CD4-positive, alpha-beta T cell (primary cell): ENCODE measurements at regions of chr18 and their contacts with region 1.

Region 1: GRCh38 chr18:75179819-75180600 is 28.9 kb downstream of the PTGR3 start:
- DNase-seq: no peak
- ATAC-seq: no peak
- H3K4me3 ChIP-seq: no peak overlapping the region
- H3K4me3 Mint-ChIP-seq: no peak overlapping the region
- H3K27ac ChIP-seq: no peak overlapping the region
- H3K27ac Mint-ChIP-seq: no peak overlapping the region
- H3K4me1 ChIP-seq: no peaks in the 10 kb centered on the region
- H3K4me1 Mint-ChIP-seq: no peaks in the 10 kb centered on the region
- H3K27me3 ChIP-seq: no peaks in the 10 kb centered on the region
- H3K27me3 Mint-ChIP-seq: no peaks in the 10 kb centered on the region
- CTCF ChIP-seq: no peak

Region 2: DNA sequence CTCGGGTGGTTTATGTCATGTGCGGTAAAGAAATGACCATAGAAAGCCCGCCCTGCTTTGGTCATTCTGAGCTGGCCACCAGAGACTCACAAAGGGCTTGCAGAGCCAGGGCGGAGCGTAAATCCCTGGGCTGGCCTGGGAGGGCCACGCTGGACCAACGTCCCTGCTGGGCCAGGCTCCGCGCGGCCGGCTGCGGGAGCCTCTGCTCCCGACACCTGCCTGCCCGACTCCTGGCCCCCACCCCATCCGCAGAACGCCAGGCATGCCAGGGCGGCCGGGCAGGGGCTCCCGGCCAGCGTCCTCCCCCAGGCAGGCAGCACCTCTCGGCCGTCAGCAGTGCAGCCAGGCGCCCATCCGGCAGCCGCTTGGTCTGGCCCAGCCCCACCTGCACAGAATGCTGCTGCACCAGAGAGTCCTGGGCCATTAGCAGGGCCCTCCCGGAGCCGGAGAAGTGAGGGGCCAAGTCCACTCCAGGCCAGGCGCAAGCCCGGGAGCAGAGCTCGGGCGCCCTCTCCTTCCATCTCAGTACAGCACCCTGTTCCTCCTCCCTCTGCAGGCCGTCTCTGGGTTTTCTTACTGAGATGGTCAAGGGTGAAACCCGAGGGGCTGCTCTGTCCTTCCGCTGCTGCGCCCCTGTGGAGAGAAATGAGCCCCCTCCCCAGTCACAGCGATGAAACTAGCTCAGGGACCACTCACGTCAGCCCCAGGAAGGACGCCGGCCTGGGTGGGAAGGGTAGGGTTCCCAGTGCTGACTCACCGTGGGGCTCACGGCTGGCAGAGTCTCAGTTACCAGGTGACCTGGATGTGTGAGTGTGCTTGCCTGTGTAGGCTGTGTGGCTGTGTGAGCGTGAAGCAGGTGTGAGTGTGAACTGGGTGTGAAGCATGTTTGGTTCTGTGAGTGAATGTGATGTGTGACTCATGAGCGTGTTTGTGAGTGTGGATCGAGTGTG is 54.4 kb before region 1 on chr18:
- CTCF ChIA-PET with region 1: no interaction called
- POLR2A ChIA-PET with region 1: no interaction called
- intact Hi-C with region 1: no loop called
- DNase-seq: no peak
- ATAC-seq: no peak
- H3K4me3 ChIP-seq: no peak overlapping the region
- H3K4me3 Mint-ChIP-seq: no peak overlapping the region
- H3K27ac ChIP-seq: no peak overlapping the region
- H3K27ac Mint-ChIP-seq: no peak overlapping the region
- H3K4me1 ChIP-seq: no peaks in the 10 kb centered on the region
- H3K4me1 Mint-ChIP-seq: no peaks in the 10 kb centered on the region
- H3K27me3 ChIP-seq: no peaks in the 10 kb centered on the region
- H3K27me3 Mint-ChIP-seq: no peaks in the 10 kb centered on the region
- CTCF ChIP-seq: no peak

Region 3: GRCh38 chr18:75478996-75479880 is 299.2 kb after region 1 on chr18:
- CTCF ChIA-PET with region 1: no interaction called
- POLR2A ChIA-PET with region 1: no interaction called
- intact Hi-C with region 1: loop called in 1 of 2 experiments (anchors 5 kb)
- DNase-seq: peak in 3 of 14 experiments; percentile 53 to 70 (median 68)
- ATAC-seq: peak; percentile 39
- H3K4me3 ChIP-seq: no peak overlapping the region
- H3K4me3 Mint-ChIP-seq: no peak overlapping the region
- H3K27ac ChIP-seq: no peak overlapping the region
- H3K27ac Mint-ChIP-seq: no peak overlapping the region
- H3K4me1 ChIP-seq: no peaks in the 10 kb centered on the region
- H3K4me1 Mint-ChIP-seq: no peaks in the 10 kb centered on the region
- H3K27me3 ChIP-seq: peaks cover 5 to 8% of the 10 kb centered on the region in 2 experiments
- H3K27me3 Mint-ChIP-seq: peaks cover 20% of the 10 kb centered on the region
- CTCF ChIP-seq: peak; percentile 67